GM12878 (cell line): ENCODE measurements at regions of chr11 and their contacts with region 1.

Region 1: GRCh38 chr11:26551186-26551801 is 20.8 kb downstream of the MUC15 start:
- DNase-seq: no peak
- ATAC-seq: peak; percentile 55
- H3K4me3 ChIP-seq: no peak overlapping the region
- H3K27ac ChIP-seq: no peak overlapping the region
- H3K4me1 ChIP-seq: no peaks in the 10 kb centered on the region
- H3K27me3 ChIP-seq: no peaks in the 10 kb centered on the region
- CTCF ChIP-seq: peak in 2 of 3 experiments; percentile 19 to 35; a peak in 3 of 6 replicates
- EP300 ChIP-seq: no peak
- POLR2A ChIP-seq: no peak
- RAD21 ChIP-seq: peak; percentile 49; the same call in 1 of the 2 replicates

Region 2: GRCh38 chr11:26286472-26287066 is 264.7 kb before region 1 on chr11:
- CTCF ChIA-PET with region 1: interaction called, 13 read pairs
- POLR2A ChIA-PET with region 1: no interaction called
- RAD21 ChIA-PET with region 1: interaction called, 3 read pairs
- SMC1A ChIA-PET with region 1: no interaction called
- in situ Hi-C with region 1: loop called (anchors 10 kb)
- intact Hi-C with region 1: no loop called
- DNase-seq: no peak
- ATAC-seq: peak; percentile 82
- H3K4me3 ChIP-seq: no peak overlapping the region
- H3K27ac ChIP-seq: no peak overlapping the region
- H3K4me1 ChIP-seq: no peaks in the 10 kb centered on the region
- H3K27me3 ChIP-seq: no peaks in the 10 kb centered on the region
- CTCF ChIP-seq: peak; percentile 34 to 56 (median 52); a peak in 3 of 6 replicates
- EP300 ChIP-seq: no peak
- POLR2A ChIP-seq: no peak
- RAD21 ChIP-seq: peak; percentile 33; the same call in 1 of the 2 replicates

Region 3: DNA sequence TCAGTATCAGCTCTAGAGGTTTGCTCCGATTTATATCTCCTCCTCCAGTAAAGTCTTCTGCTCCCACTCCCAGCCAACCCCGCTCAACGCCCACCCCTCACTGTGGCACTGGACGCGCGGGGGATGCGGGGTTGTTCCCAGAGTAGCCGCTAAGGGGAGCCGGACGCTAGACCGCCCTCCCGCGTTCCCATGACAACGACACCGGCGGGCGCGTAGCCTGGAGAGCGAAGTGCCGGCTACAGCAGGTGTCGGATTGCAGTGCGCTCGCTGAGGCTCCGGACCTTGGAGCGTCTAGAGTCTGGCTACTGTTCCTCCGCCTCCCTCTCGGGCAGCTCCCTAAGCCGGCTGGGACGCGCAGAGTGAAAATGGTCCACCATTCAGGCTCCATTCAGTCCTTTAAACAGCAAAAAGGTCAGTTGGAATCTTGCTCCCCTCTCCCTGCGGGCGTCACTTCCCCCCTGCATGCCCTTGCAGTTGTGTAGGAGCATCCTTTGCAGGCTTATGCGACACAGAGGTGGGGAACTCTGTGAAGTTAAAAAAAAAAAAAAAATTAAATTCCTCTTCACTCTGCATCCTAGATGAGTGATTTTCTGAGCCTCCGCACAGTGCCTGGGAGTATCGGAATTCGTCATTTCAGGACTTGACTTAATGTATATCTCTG is 219.3 kb before region 1 on chr11 and contains the start of gene ANO3:
- CTCF ChIA-PET with region 1: interaction called, 4 read pairs
- POLR2A ChIA-PET with region 1: no interaction called
- RAD21 ChIA-PET with region 1: no interaction called
- SMC1A ChIA-PET with region 1: no interaction called
- in situ Hi-C with region 1: no loop called
- intact Hi-C with region 1: loop called (anchors 10 kb)
- DNase-seq: no peak
- ATAC-seq: peak; percentile 98
- H3K4me3 ChIP-seq: no peak within 1 kb of the TSS
- H3K27ac ChIP-seq: no peak within 1 kb of the TSS
- H3K4me1 ChIP-seq: no peaks in the 10 kb centered on the region
- H3K27me3 ChIP-seq: peaks cover 2 to 4% of the 10 kb centered on the region in 2 experiments; a peak in 3 of 4 replicates
- CTCF ChIP-seq: peak; percentile 33 to 59 (median 37); a peak in 5 of 6 replicates
- EP300 ChIP-seq: no peak
- POLR2A ChIP-seq: no peak
- RAD21 ChIP-seq: peak; percentile 47; the same call in 1 of the 2 replicates
- polyA plus RNA-seq, gene ANO3: 0.14 to 0.27 TPM

Region 4: GRCh38 chr11:26478710-26479109 is 72.6 kb before region 1 on chr11:
- CTCF ChIA-PET with region 1: interaction called, 5 read pairs
- POLR2A ChIA-PET with region 1: no interaction called
- RAD21 ChIA-PET with region 1: interaction called, 7 read pairs
- SMC1A ChIA-PET with region 1: interaction called, 4 read pairs
- in situ Hi-C with region 1: no loop called
- intact Hi-C with region 1: loop called (anchors 2 kb)
- DNase-seq: no peak
- ATAC-seq: no peak
- H3K4me3 ChIP-seq: no peak overlapping the region
- H3K27ac ChIP-seq: no peak overlapping the region
- H3K4me1 ChIP-seq: no peaks in the 10 kb centered on the region
- H3K27me3 ChIP-seq: no peaks in the 10 kb centered on the region
- CTCF ChIP-seq: no peak
- EP300 ChIP-seq: no peak
- POLR2A ChIP-seq: no peak
- RAD21 ChIP-seq: no peak

Region 5: DNA sequence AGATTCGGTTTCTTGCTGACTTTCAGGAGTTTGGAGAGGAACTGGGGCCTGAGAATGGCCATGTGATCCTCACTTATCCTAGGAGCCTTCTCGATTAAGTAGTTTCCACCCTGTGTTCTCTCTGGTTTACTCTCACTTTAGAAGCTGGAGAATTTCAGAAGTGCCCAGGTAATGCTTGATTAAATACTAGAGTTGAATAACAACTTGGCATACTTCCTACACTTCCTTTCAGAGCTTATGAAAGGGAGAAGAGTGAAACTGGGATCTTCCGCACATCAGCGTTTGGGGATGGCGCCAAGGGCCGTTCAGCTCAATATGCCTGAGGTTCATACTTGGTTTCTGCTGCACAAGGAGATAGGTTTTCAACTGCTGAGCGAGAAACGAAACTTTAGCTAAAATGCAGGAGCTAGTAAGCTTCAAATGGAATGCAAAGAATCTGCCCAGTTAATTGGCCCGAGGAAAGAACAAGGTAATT is 21.5 kb after region 1 on chr11:
- CTCF ChIA-PET with region 1: interaction called, 15 read pairs
- POLR2A ChIA-PET with region 1: interaction called, 3 read pairs
- RAD21 ChIA-PET with region 1: interaction called, 11 read pairs
- SMC1A ChIA-PET with region 1: interaction called, 15 read pairs
- in situ Hi-C with region 1: no loop called
- intact Hi-C with region 1: no loop called
- DNase-seq: no peak
- ATAC-seq: peak; percentile 17; the same call in 2 of the 3 replicates
- H3K4me3 ChIP-seq: no peak overlapping the region
- H3K27ac ChIP-seq: no peak overlapping the region
- H3K4me1 ChIP-seq: no peaks in the 10 kb centered on the region
- H3K27me3 ChIP-seq: no peaks in the 10 kb centered on the region; a peak in 1 of 4 replicates
- CTCF ChIP-seq: no peak
- EP300 ChIP-seq: no peak
- POLR2A ChIP-seq: no peak
- RAD21 ChIP-seq: no peak

Region 6: GRCh38 chr11:26632691-26633159 is 81.4 kb after region 1 on chr11:
- CTCF ChIA-PET with region 1: interaction called, 4 read pairs
- POLR2A ChIA-PET with region 1: no interaction called
- RAD21 ChIA-PET with region 1: interaction called, 3 read pairs
- SMC1A ChIA-PET with region 1: interaction called, 23 read pairs
- in situ Hi-C with region 1: no loop called
- intact Hi-C with region 1: loop called (anchors 5 kb)
- DNase-seq: peak; percentile 62
- ATAC-seq: peak; percentile 96
- H3K4me3 ChIP-seq: no peak overlapping the region
- H3K27ac ChIP-seq: peak overlapping the region; percentile 30; the same call in 1 of the 2 replicates
- H3K4me1 ChIP-seq: peaks cover 4% of the 10 kb centered on the region
- H3K27me3 ChIP-seq: no peaks in the 10 kb centered on the region
- CTCF ChIP-seq: no peak
- EP300 ChIP-seq: peak; percentile 76 to 82; a peak in 3 of 4 replicates
- POLR2A ChIP-seq: no peak
- RAD21 ChIP-seq: no peak

Region 7: DNA sequence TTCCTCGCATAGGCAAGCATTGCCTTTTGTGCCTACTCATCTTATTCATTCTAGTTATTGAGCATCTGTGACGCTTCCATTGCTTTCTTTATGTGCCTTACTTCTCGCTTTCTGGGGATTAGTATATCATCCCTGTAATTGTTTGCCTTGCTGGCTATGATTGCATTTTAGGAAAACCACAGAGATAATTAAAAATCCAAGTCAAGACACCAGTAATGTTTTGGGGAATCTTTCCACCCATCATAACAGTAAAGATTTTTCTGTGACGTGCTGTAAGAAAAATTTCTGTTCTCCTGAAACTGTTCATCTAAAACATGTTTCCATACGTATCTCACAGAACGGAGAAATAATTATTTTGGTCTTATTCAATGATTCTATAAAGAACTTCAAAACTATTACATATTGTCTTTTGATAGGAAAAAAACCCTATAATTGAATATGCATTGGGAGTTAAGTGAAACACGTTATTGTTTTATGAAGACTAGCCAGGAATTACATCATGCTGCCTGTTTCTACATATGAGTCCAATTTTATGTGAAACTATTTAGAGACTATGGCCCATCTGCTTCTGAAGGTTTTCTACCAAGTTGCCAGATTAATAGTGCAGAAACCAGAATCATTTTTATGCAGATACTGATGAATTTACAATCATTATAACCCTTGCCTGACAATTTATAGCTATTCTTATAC is 308.9 kb after region 1 on chr11:
- CTCF ChIA-PET with region 1: no interaction called
- POLR2A ChIA-PET with region 1: no interaction called
- RAD21 ChIA-PET with region 1: no interaction called
- SMC1A ChIA-PET with region 1: no interaction called
- in situ Hi-C with region 1: no loop called
- intact Hi-C with region 1: no loop called
- DNase-seq: no peak
- ATAC-seq: no peak
- H3K4me3 ChIP-seq: no peak overlapping the region
- H3K27ac ChIP-seq: no peak overlapping the region
- H3K4me1 ChIP-seq: no peaks in the 10 kb centered on the region
- H3K27me3 ChIP-seq: no peaks in the 10 kb centered on the region
- CTCF ChIP-seq: no peak
- EP300 ChIP-seq: no peak
- POLR2A ChIP-seq: no peak
- RAD21 ChIP-seq: no peak